Dorsolateral prefrontal cortex (tissue), 120 donors: ENCODE measurements at regions of chr3 and their contacts with region 1.

Region 1: GRCh38 chr3:57227204-57227929 is at the start of gene APPL1:
- DNase-seq: peak; percentile 83 to 98 (median 90)
- H3K4me3 ChIP-seq: peak within 1 kb of the TSS; percentile 71 to 97 (median 84)
- H3K27ac ChIP-seq: peak within 1 kb of the TSS; percentile 20 to 97 (median 89)
- H3K27me3 ChIP-seq: no peaks in the 10 kb centered on the region
- CTCF ChIP-seq: peak in 20 of 56 donors; percentile 3 to 56 (median 23)
- total RNA-seq, gene APPL1: 40.9 to 68.5 (median 56.2) TPM

Region 2: DNA sequence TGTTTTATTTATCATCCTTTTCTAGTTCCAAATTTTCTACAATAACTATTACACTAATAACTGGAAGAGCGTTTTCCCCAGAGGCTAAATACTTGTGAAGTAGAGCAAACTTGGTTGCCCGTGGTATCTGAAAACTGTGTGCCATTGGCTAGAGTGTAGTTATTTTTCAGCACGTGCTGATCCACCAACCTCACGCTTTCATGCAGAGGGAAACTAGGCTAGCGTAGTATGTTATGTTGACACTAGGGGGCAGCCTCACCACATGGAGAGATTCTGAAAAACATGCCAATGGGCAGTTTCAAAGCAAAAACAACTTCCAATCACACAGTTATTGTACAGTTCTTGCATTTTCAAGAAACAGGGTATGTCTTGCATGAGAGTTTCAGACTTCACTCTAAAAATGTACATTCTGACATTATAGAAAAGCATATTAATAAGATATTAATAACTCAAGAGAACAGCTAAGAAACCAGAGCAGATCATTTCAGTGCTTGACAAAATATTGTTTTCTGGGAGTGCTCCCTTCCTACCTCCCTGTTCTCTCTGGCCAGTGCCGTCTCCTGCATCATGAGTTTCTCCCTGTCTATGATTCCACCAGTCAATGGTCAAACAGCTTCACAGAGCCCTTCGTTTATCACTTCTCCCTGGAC is 127.2 kb before region 1 on chr3:
- intact Hi-C with region 1: loop called (anchors 2 to 10 kb)
- DNase-seq: peak in 8 of 10 donors; percentile 50 to 80 (median 68)
- H3K4me3 ChIP-seq: no peak overlapping the region
- H3K27ac ChIP-seq: no peak overlapping the region
- H3K27me3 ChIP-seq: no peaks in the 10 kb centered on the region
- CTCF ChIP-seq: peak; percentile 80 to 98 (median 92)

Region 3: GRCh38 chr3:57164657-57165573 is 62.5 kb before region 1 on chr3 and contains the start of gene IL17RD:
- intact Hi-C with region 1: loop called (anchors 2 to 5 kb)
- DNase-seq: peak in 6 of 10 donors; percentile 32 to 66 (median 54)
- H3K4me3 ChIP-seq: peak within 1 kb of the TSS; percentile 60 to 92 (median 80)
- H3K27ac ChIP-seq: peak within 1 kb of the TSS in 6 of 59 donors; percentile 20 to 75 (median 40)
- H3K27me3 ChIP-seq: peaks cover 0 to 12% (median 0%) of the 10 kb centered on the region in 45 donors
- CTCF ChIP-seq: peak in 5 of 56 donors; percentile 8 to 31 (median 23)
- total RNA-seq, gene IL17RD: 4.1 to 18.6 (median 8.8) TPM

Region 4: GRCh38 chr3:57169872-57170623 is 57.3 kb before region 1 on chr3:
- intact Hi-C with region 1: loop called (anchors 2 to 5 kb)
- DNase-seq: peak in 9 of 10 donors; percentile 44 to 79 (median 64)
- H3K4me3 ChIP-seq: peak overlapping the region; percentile 23 to 69 (median 51)
- H3K27ac ChIP-seq: peak overlapping the region in 3 of 59 donors; percentile 8 to 52 (median 17)
- H3K27me3 ChIP-seq: peaks cover 0 to 12% (median 0%) of the 10 kb centered on the region in 45 donors
- CTCF ChIP-seq: peak; percentile 66 to 90 (median 84)

Region 5: DNA sequence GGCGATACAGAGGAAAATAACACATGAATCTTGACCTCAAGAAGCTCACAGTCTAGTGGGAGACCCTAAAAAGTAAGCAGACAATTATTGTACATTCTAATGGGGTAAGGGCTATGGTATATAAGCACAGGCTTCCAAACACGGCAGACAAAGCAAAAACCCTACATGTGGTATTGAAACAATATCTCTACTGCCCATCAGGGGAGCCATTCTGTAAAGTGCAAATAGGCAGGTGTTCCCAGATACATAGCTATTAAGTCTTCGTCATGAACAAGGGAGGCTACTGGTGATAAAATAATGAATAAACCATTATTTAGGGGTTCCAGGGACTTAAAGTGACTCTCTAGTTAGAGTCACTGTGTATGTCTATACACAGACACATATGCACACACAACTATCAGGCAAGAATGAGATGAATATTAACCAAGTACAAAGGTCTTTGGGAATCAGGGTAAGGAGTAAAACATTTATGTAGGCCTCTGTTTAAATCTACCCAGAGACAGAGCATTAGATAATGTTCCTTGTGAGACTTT is 103.8 kb after region 1 on chr3:
- intact Hi-C with region 1: no loop called
- DNase-seq: no peak
- H3K4me3 ChIP-seq: no peak overlapping the region
- H3K27ac ChIP-seq: no peak overlapping the region
- H3K27me3 ChIP-seq: no peaks in the 10 kb centered on the region
- CTCF ChIP-seq: no peak